GM12878 (cell line): ENCODE measurements at regions of chr4 and their contacts with region 1.

Region 1: GRCh38 chr4:83110223-83110945 is 4.1 kb downstream of the PLAC8 start:
- DNase-seq: peak; percentile 90
- ATAC-seq: peak; percentile 80
- H3K4me3 ChIP-seq: peak overlapping the region; percentile 78
- H3K27ac ChIP-seq: peak overlapping the region; percentile 71
- H3K4me1 ChIP-seq: peaks cover 14% of the 10 kb centered on the region
- H3K27me3 ChIP-seq: no peaks in the 10 kb centered on the region
- CTCF ChIP-seq: peak; percentile 80 to 94 (median 89); a peak in 5 of 6 replicates
- EP300 ChIP-seq: peak; percentile 46 to 69; a peak in 2 of 4 replicates
- POLR2A ChIP-seq: peak; percentile 67
- RAD21 ChIP-seq: peak; percentile 46

Region 2: DNA sequence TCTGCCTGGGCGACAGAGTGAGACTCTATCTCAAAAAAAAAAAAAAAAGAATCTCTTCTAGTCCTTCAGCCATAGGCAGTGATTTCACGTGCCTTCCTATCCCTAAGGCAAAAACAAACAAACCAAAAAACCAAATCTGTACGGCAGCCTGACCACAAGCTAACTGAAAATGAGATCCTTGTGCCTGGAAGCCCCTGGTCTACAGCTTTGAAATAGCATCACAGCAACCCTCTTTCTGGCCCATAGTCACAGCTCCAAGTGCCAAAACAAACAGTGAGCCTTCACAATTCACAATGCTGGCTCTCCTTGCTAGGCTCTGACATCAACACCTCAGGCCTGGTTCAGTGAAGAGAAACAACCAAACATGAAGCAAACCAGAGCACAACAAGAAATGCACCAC is 594.7 kb before region 1 on chr4:
- CTCF ChIA-PET with region 1: no interaction called
- POLR2A ChIA-PET with region 1: no interaction called
- RAD21 ChIA-PET with region 1: no interaction called
- SMC1A ChIA-PET with region 1: no interaction called
- in situ Hi-C with region 1: no loop called
- intact Hi-C with region 1: no loop called
- DNase-seq: no peak
- ATAC-seq: no peak
- H3K4me3 ChIP-seq: no peak overlapping the region
- H3K27ac ChIP-seq: no peak overlapping the region
- H3K4me1 ChIP-seq: no peaks in the 10 kb centered on the region
- H3K27me3 ChIP-seq: peaks cover 0 to 2% of the 10 kb centered on the region in 2 experiments; a peak in 2 of 4 replicates
- CTCF ChIP-seq: no peak
- EP300 ChIP-seq: no peak
- POLR2A ChIP-seq: no peak
- RAD21 ChIP-seq: no peak

Region 3: DNA sequence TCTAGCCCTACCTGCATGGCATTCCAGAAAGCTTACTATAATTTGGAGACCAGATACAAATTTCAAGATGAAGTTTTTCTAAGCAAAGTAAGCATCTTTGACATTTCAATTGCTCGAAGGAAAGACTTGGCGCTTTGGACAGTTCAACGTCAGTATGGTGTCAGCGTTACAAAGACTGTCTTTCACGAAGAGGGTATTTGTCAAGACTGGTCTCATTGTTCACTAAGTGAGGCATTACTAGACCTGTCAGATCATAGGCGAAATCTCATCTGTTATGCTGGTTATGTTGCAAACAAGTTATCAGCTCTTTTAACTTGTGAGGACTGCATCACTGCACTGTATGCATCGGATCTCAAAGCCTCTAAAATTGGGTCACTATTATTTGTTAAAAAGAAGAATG is 192.3 kb before region 1 on chr4:
- CTCF ChIA-PET with region 1: no interaction called
- POLR2A ChIA-PET with region 1: no interaction called
- RAD21 ChIA-PET with region 1: no interaction called
- SMC1A ChIA-PET with region 1: no interaction called
- in situ Hi-C with region 1: no loop called
- intact Hi-C with region 1: no loop called
- DNase-seq: no peak
- ATAC-seq: no peak
- H3K4me3 ChIP-seq: no peak overlapping the region
- H3K27ac ChIP-seq: no peak overlapping the region
- H3K4me1 ChIP-seq: no peaks in the 10 kb centered on the region
- H3K27me3 ChIP-seq: no peaks in the 10 kb centered on the region
- CTCF ChIP-seq: no peak
- EP300 ChIP-seq: no peak
- POLR2A ChIP-seq: no peak
- RAD21 ChIP-seq: no peak

Region 4: GRCh38 chr4:83074086-83074704 is 36.2 kb before region 1 on chr4:
- CTCF ChIA-PET with region 1: interaction called, 18 read pairs
- POLR2A ChIA-PET with region 1: no interaction called
- RAD21 ChIA-PET with region 1: interaction called, 13 read pairs
- SMC1A ChIA-PET with region 1: interaction called, 25 read pairs
- in situ Hi-C with region 1: no loop called
- intact Hi-C with region 1: loop called (anchors 1 kb)
- DNase-seq: peak; percentile 79
- ATAC-seq: peak; percentile 95
- H3K4me3 ChIP-seq: no peak overlapping the region
- H3K27ac ChIP-seq: peak overlapping the region; percentile 7; the same call in 1 of the 2 replicates
- H3K4me1 ChIP-seq: peaks cover 8% of the 10 kb centered on the region
- H3K27me3 ChIP-seq: no peaks in the 10 kb centered on the region
- CTCF ChIP-seq: peak; percentile 74 to 78 (median 77)
- EP300 ChIP-seq: 0 out of 4 replicates have a peak, but pooled peaks of 1 of the 2 experiments have one; percentile 31
- POLR2A ChIP-seq: no peak
- RAD21 ChIP-seq: peak; percentile 92

Region 5: GRCh38 chr4:83174844-83175414 is 64.5 kb after region 1 on chr4:
- CTCF ChIA-PET with region 1: interaction called, 13 read pairs
- POLR2A ChIA-PET with region 1: interaction called, 13 read pairs
- RAD21 ChIA-PET with region 1: interaction called, 61 read pairs
- SMC1A ChIA-PET with region 1: interaction called, 61 read pairs
- in situ Hi-C with region 1: no loop called
- intact Hi-C with region 1: loop called (anchors 1 kb)
- DNase-seq: peak; percentile 87
- ATAC-seq: peak; percentile 76
- H3K4me3 ChIP-seq: 0 out of 2 replicates have a peak overlapping the region, but pooled peaks have one; percentile 30
- H3K27ac ChIP-seq: peak overlapping the region; percentile 90
- H3K4me1 ChIP-seq: peaks cover 62% of the 10 kb centered on the region
- H3K27me3 ChIP-seq: no peaks in the 10 kb centered on the region
- CTCF ChIP-seq: no peak
- EP300 ChIP-seq: peak; percentile 1 to 47; a peak in 1 of 4 replicates
- POLR2A ChIP-seq: no peak
- RAD21 ChIP-seq: no peak

Region 6: DNA sequence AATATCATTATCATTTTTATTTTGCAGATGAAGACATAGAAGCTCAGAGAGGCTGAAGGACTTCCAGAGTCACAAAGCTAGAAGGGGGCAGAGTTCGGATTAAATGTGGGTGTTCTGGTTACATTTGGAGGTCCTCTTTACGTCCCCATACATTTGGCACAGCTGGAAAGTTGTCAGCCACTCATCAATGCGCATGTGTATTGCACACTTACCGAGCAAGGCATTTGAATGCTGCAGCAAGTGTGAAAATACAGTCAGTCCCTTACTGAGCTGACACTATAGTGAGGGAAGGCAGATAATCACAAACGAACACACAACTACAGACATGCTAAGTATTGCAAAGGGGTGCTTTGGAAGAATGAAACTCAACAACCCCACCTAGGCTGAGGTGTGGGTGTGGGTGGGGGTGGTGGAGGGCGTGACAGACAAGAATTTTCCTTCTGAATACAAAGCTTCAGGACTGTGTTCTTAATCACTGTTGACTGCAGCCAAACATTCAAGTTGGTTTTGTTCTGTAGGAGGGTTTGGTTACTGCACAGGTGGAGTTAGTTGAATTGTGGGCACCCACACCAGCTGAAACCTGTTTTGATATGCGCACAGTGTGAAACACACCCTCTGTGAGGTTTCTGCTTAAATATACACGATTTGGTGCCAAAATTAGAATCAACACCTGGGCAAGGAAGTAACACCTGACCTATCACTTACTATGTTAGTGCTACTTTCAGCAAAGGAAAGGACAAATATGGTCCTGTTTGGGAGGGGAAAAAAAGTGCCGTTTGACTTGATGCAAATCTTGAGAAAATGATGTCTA is 101.9 kb after region 1 on chr4:
- CTCF ChIA-PET with region 1: interaction called, 26 read pairs
- POLR2A ChIA-PET with region 1: interaction called, 77 read pairs
- RAD21 ChIA-PET with region 1: interaction called, 127 read pairs
- SMC1A ChIA-PET with region 1: interaction called, 183 read pairs
- in situ Hi-C with region 1: loop called (anchors 5 kb)
- intact Hi-C with region 1: loop called (anchors 1 kb)
- DNase-seq: peak; percentile 90
- ATAC-seq: peak; percentile 87
- H3K4me3 ChIP-seq: no peak overlapping the region
- H3K27ac ChIP-seq: peak overlapping the region; percentile 60
- H3K4me1 ChIP-seq: peaks cover 29% of the 10 kb centered on the region
- H3K27me3 ChIP-seq: no peaks in the 10 kb centered on the region
- CTCF ChIP-seq: no peak
- EP300 ChIP-seq: peak; percentile 70 to 88; a peak in 3 of 4 replicates
- POLR2A ChIP-seq: no peak
- RAD21 ChIP-seq: no peak

Region 7: GRCh38 chr4:83252782-83253405 is 142.5 kb after region 1 on chr4:
- CTCF ChIA-PET with region 1: interaction called, 43 read pairs
- POLR2A ChIA-PET with region 1: interaction called, 8 read pairs
- RAD21 ChIA-PET with region 1: interaction called, 17 read pairs
- SMC1A ChIA-PET with region 1: interaction called, 53 read pairs
- in situ Hi-C with region 1: no loop called
- intact Hi-C with region 1: loop called (anchors 1 kb)
- DNase-seq: no peak
- ATAC-seq: peak; percentile 83
- H3K4me3 ChIP-seq: no peak overlapping the region
- H3K27ac ChIP-seq: no peak overlapping the region
- H3K4me1 ChIP-seq: peaks cover 13% of the 10 kb centered on the region; the same call in 1 of the 2 replicates
- H3K27me3 ChIP-seq: no peaks in the 10 kb centered on the region
- CTCF ChIP-seq: peak; percentile 82 to 86 (median 84)
- EP300 ChIP-seq: no peak
- POLR2A ChIP-seq: no peak
- RAD21 ChIP-seq: peak; percentile 93

Region 8: GRCh38 chr4:83276299-83277040 is 166.1 kb after region 1 on chr4:
- CTCF ChIA-PET with region 1: interaction called, 7 read pairs
- POLR2A ChIA-PET with region 1: interaction called, 6 read pairs
- RAD21 ChIA-PET with region 1: interaction called, 49 read pairs
- SMC1A ChIA-PET with region 1: interaction called, 8 read pairs
- in situ Hi-C with region 1: no loop called
- intact Hi-C with region 1: loop called (anchors 1 kb)
- DNase-seq: no peak
- ATAC-seq: peak; percentile 70
- H3K4me3 ChIP-seq: peak overlapping the region; percentile 26; the same call in 1 of the 2 replicates
- H3K27ac ChIP-seq: peak overlapping the region; percentile 78
- H3K4me1 ChIP-seq: peaks cover 44% of the 10 kb centered on the region
- H3K27me3 ChIP-seq: no peaks in the 10 kb centered on the region
- CTCF ChIP-seq: no peak
- EP300 ChIP-seq: peak in 1 of 2 experiments; percentile 70; a peak in 1 of 4 replicates
- POLR2A ChIP-seq: no peak
- RAD21 ChIP-seq: no peak